Activated naive CD4-positive, alpha-beta T cell treated with anti-CD3 and anti-CD28 coated beads, Interleukin-2, amount 10 ng/mL, durations not matched to agents 7 days and 5 days (primary cell): ENCODE measurements at regions of chr11 and their contacts with region 1.

Region 1: GRCh38 chr11:4636962-4637661 is at the start of gene OR51D1:
- DNase-seq: peak; percentile 76
- H3K4me3 Mint-ChIP-seq: no peak within 1 kb of the TSS
- H3K27ac Mint-ChIP-seq: no peak within 1 kb of the TSS
- H3K4me1 Mint-ChIP-seq: no peaks in the 10 kb centered on the region
- H3K27me3 Mint-ChIP-seq: no peaks in the 10 kb centered on the region

Region 2: DNA sequence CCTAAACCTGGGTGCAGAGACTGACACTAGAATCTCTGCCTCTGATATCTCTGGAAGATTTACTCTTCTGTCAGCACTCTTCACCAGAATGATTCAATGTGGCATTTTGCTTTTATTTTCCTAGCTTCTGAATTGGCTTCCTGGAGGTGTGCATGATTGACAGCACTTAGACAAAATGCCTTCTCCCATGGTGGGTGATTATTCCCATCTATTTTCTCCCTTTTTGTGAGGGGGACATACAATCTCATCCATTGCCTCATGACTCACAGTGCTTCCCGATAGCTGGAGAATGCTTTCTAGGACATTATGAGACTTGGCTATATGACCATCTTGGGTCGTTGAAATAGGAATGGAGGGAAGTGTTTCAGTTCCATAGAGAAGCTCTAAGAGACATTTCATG is 25.1 kb before region 1 on chr11:
- CTCF ChIA-PET with region 1: interaction called, 10 read pairs
- DNase-seq: no peak
- H3K4me3 Mint-ChIP-seq: no peak overlapping the region
- H3K27ac Mint-ChIP-seq: no peak overlapping the region
- H3K4me1 Mint-ChIP-seq: peaks cover 29% of the 10 kb centered on the region
- H3K27me3 Mint-ChIP-seq: no peaks in the 10 kb centered on the region

Region 3: GRCh38 chr11:4626207-4627099 is 10.7 kb before region 1 on chr11:
- CTCF ChIA-PET with region 1: interaction called, 34 read pairs
- DNase-seq: peak; percentile 78
- H3K4me3 Mint-ChIP-seq: no peak overlapping the region
- H3K27ac Mint-ChIP-seq: no peak overlapping the region
- H3K4me1 Mint-ChIP-seq: no peaks in the 10 kb centered on the region
- H3K27me3 Mint-ChIP-seq: peaks cover 6% of the 10 kb centered on the region

Region 4: DNA sequence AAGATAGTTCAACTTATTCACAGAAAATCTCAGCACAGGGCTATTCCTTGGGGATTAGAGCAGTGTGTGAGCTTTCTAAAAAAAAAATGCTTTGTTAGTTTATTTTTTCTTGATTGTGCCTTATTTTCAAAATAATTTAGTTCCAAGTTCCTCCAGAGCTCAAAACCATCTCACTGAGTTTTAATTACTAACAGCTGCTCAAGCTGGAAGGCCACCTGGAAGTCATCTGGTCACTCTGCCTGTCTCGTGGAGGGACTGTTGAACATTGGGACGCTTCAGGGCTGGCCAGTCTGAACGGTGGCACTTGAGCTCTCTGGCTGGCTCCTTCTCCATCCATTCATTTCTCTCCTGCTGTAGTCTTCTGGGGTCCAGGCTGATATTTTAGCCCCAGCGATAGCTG is 10.7 kb after region 1 on chr11:
- CTCF ChIA-PET with region 1: interaction called, 14 read pairs
- DNase-seq: no peak
- H3K4me3 Mint-ChIP-seq: no peak overlapping the region
- H3K27ac Mint-ChIP-seq: no peak overlapping the region
- H3K4me1 Mint-ChIP-seq: no peaks in the 10 kb centered on the region
- H3K27me3 Mint-ChIP-seq: peaks cover 21% of the 10 kb centered on the region